Ascending aorta (tissue), 2 donors: ENCODE measurements at regions of chr13 and their contacts with region 1.

Region 1: GRCh38 chr13:23466144-23467002 is 32.9 kb upstream of the SACS start:
- DNase-seq: peak in 1 of 2 donors; percentile 81
- H3K4me3 ChIP-seq: peak overlapping the region; percentile 60 to 69
- H3K27ac ChIP-seq: peak overlapping the region; percentile 81 to 84
- H3K4me1 ChIP-seq: peaks cover 0 to 5% of the 10 kb centered on the region in 2 donors
- H3K27me3 ChIP-seq: no peaks in the 10 kb centered on the region
- CTCF ChIP-seq: peak; percentile 24 to 63 (median 56)

Region 2: GRCh38 chr13:23427342-23427843 is 39.0 kb before region 1 on chr13:
- intact Hi-C with region 1: loop called (anchors 1 kb)
- DNase-seq: peak in 1 of 2 donors; percentile 88
- H3K4me3 ChIP-seq: peak overlapping the region; percentile 24 to 47
- H3K27ac ChIP-seq: peak overlapping the region; percentile 78 to 88
- H3K4me1 ChIP-seq: peaks cover 4 to 18% of the 10 kb centered on the region in 2 donors
- H3K27me3 ChIP-seq: no peaks in the 10 kb centered on the region
- CTCF ChIP-seq: no peak

Region 3: DNA sequence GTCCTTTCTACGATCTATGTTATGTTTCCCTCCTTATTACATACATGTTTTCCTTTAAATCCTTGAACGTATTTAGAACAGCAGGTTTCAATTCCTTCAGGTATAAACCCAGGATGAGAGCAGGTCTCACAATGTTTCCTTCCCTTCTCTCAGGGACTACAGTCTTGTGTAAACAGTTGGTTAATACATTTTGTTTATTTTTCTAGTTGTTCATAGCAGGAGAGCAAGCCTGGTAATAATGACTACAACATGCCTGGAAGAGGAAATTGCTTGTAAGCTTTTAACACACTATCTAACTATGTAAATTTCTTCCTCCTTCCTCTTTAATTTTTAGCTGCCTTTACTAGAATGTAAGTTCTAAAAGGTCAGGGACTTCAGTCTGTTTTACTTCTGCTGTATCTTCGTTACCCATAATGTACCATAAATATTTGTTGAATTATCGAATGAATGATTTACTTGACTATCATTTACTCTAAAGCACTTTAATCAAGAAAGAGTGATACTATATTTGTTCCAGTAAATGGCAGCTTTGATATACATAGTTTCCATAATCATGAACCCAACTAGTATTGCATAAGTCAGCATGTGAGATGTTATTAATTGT is 75.0 kb after region 1 on chr13:
- intact Hi-C with region 1: no loop called
- DNase-seq: no peak
- H3K4me3 ChIP-seq: no peak overlapping the region
- H3K27ac ChIP-seq: no peak overlapping the region
- H3K4me1 ChIP-seq: no peaks in the 10 kb centered on the region
- H3K27me3 ChIP-seq: no peaks in the 10 kb centered on the region
- CTCF ChIP-seq: no peak

Region 4: GRCh38 chr13:23579072-23579895 is 112.9 kb after region 1 on chr13:
- intact Hi-C with region 1: loop called (anchors 5 kb)
- DNase-seq: peak; percentile 32 to 92
- H3K4me3 ChIP-seq: peak overlapping the region; percentile 81 to 95
- H3K27ac ChIP-seq: peak overlapping the region in 1 of 2 donors; percentile 15
- H3K4me1 ChIP-seq: peaks cover 0 to 6% of the 10 kb centered on the region in 2 donors
- H3K27me3 ChIP-seq: peaks cover 7% of the 10 kb centered on the region
- CTCF ChIP-seq: no peak

Region 5: DNA sequence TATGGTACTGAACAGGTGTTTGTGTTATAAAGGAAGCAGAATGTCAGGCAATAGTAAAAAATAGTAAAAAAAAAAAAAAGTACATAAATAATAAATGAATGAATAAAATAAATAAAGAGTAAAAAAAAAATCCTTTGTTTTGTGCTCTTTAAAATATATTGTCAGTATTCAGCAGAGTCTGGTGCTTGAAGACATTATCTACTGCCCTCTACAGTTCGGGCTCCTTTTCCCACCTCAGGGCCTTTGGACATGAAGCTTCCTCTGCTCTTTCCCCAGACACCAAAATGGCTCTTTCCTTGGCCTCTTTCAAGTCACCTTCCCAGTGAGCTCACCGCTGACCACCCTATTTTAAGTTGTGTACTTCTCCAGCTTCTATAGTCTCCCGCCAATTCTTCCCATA is 241.3 kb after region 1 on chr13:
- intact Hi-C with region 1: no loop called
- DNase-seq: no peak
- H3K4me3 ChIP-seq: no peak overlapping the region
- H3K27ac ChIP-seq: no peak overlapping the region
- H3K4me1 ChIP-seq: no peaks in the 10 kb centered on the region
- H3K27me3 ChIP-seq: no peaks in the 10 kb centered on the region
- CTCF ChIP-seq: no peak

Region 6: GRCh38 chr13:23871616-23872220 is 405.3 kb after region 1 on chr13:
- intact Hi-C with region 1: loop called (anchors 2 kb)
- DNase-seq: no peak
- H3K4me3 ChIP-seq: no peak overlapping the region
- H3K27ac ChIP-seq: no peak overlapping the region
- H3K4me1 ChIP-seq: no peaks in the 10 kb centered on the region
- H3K27me3 ChIP-seq: no peaks in the 10 kb centered on the region
- CTCF ChIP-seq: peak; percentile 34 to 58 (median 38)

Region 7: DNA sequence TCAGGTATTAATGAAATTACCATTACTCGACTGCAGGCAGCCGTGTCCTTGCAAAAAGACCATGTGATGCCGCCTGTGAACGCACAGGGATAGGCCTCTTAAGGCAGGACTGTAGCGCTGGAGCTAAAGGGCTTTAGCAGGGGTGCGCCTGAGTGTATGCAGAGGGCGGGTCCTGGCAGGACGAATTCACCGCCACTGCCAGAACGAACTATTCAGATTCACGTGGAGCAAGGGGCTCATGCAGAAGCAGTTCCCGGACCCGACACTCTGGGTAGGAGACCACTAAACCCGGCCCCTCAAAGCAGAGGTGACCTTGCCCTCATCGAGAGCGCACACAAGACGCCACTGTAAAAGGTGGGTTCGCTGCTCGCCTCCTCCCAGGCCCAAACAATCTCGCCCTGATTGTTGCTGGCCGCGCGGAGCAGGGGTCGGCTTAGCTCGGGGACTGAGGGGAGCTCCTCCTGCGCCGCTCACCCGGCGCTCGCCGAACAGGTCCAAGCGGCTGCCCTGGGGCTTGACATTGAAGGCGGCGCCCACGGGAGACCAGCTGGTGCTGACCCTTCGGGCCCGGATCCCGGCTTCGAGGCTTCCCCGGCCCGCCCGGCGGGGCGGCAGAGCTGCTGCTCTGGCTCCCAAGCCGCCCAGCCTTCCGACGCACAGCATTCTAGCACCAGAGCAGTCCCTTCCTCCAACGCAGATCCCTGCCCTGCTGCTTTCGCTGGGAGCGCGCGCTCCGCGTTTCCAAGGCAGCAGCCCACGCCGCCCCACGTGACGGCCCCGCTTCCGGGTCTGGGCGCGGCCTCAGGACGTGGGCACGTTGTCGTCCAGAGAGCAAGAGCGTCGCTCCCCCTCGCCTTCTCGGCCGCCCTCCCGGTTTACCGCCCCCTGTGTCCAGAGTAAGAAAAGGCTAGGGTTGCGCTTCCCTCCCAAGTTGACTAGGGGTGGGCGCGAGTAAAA is 422.6 kb after region 1 on chr13 and contains the start of gene MIPEP:
- intact Hi-C with region 1: loop called (anchors 5 kb)
- DNase-seq: peak; percentile 58 to 94
- H3K4me3 ChIP-seq: peak within 1 kb of the TSS; percentile 93 to 98
- H3K27ac ChIP-seq: peak within 1 kb of the TSS; percentile 83 to 89
- H3K4me1 ChIP-seq: peaks cover 0 to 7% of the 10 kb centered on the region in 2 donors
- H3K27me3 ChIP-seq: no peaks in the 10 kb centered on the region
- CTCF ChIP-seq: peak; percentile 48 to 82 (median 77)
- total RNA-seq, gene MIPEP: 2.8 TPM

Region 8: GRCh38 chr13:23899555-23899954 is 433.2 kb after region 1 on chr13:
- intact Hi-C with region 1: loop called (anchors 1 kb)
- DNase-seq: no peak
- H3K4me3 ChIP-seq: no peak overlapping the region
- H3K27ac ChIP-seq: no peak overlapping the region
- H3K4me1 ChIP-seq: peaks cover 0 to 6% of the 10 kb centered on the region in 2 donors
- H3K27me3 ChIP-seq: no peaks in the 10 kb centered on the region
- CTCF ChIP-seq: peak in 2 of 3 experiments; percentile 33 to 36

Region 9: GRCh38 chr13:24220086-24220703 is 753.8 kb after region 1 on chr13:
- intact Hi-C with region 1: loop called (anchors 10 kb)
- DNase-seq: peak in 1 of 2 donors; percentile 78
- H3K4me3 ChIP-seq: no peak overlapping the region
- H3K27ac ChIP-seq: no peak overlapping the region
- H3K4me1 ChIP-seq: peaks cover 0 to 3% of the 10 kb centered on the region in 2 donors
- H3K27me3 ChIP-seq: no peaks in the 10 kb centered on the region
- CTCF ChIP-seq: peak; percentile 70 to 76 (median 71)